Caco-2 (cell line): ENCODE measurements at regions of chr22 and their contacts with region 1.

Region 1: DNA sequence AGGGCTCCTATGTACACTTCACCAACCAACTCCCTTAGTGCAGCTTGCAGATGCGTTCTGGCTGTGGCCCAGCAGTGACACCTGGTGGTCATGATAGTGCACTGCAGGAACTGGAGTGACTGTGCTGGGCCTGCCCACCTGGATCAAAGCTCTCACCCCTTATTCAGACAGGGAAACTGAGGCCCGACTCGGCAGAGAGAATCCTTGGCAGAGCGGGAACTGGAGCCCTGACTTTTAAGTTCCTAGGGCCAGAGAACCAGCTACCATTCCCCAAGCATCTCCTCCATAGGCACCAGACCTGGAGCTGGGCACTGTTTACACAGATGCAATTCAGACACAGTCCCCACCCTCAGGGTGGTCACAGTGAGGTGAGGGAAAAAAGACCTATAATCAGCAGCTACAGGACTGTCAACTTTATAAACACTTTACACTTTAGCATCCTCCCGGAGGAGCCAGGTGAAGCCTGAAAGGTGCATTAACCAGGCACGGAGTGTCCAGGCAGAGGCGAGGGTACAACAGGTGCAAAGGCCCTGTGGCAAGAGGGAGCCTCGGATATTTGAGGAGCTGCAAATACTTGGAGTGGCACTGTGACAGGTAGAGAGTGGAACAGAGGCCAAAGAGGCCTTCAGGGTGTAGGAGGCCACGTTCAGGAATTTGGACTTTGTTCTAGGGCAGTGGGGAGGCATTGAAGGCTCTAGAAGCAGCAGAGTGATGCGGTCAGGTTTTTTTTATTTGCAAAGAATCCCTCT is 22.0 kb downstream of the RHBDD3 start:
- DNase-seq: peak; percentile 79 to 80
- H3K4me3 ChIP-seq: no peak overlapping the region
- H3K4me3 Mint-ChIP-seq: peak overlapping the region; percentile 13
- H3K27ac Mint-ChIP-seq: peak overlapping the region; percentile 74
- H3K4me1 ChIP-seq: peaks cover 22% of the 10 kb centered on the region
- H3K4me1 Mint-ChIP-seq: peaks cover 14% of the 10 kb centered on the region
- H3K27me3 ChIP-seq: no peaks in the 10 kb centered on the region
- H3K27me3 Mint-ChIP-seq: no peaks in the 10 kb centered on the region
- CTCF ChIP-seq: peak; percentile 95 to 97

Region 2: GRCh38 chr22:28600546-28601143 is 645.2 kb before region 1 on chr22:
- CTCF ChIA-PET with region 1: no interaction called
- POLR2A ChIA-PET with region 1: no interaction called
- intact Hi-C with region 1: loop called (anchors 10 kb)
- DNase-seq: peak in 1 of 2 experiments; percentile 44
- H3K4me3 ChIP-seq: no peak overlapping the region
- H3K4me3 Mint-ChIP-seq: no peak overlapping the region
- H3K27ac Mint-ChIP-seq: no peak overlapping the region
- H3K4me1 ChIP-seq: no peaks in the 10 kb centered on the region
- H3K4me1 Mint-ChIP-seq: no peaks in the 10 kb centered on the region
- H3K27me3 ChIP-seq: no peaks in the 10 kb centered on the region
- H3K27me3 Mint-ChIP-seq: peaks cover 6% of the 10 kb centered on the region
- CTCF ChIP-seq: peak; percentile 41 to 66

Region 3: GRCh38 chr22:28943501-28943879 is 302.3 kb before region 1 on chr22:
- CTCF ChIA-PET with region 1: no interaction called
- POLR2A ChIA-PET with region 1: no interaction called
- intact Hi-C with region 1: no loop called
- DNase-seq: no peak
- H3K4me3 ChIP-seq: no peak overlapping the region
- H3K4me3 Mint-ChIP-seq: no peak overlapping the region
- H3K27ac Mint-ChIP-seq: peak overlapping the region; percentile 65
- H3K4me1 ChIP-seq: peaks cover 42% of the 10 kb centered on the region
- H3K4me1 Mint-ChIP-seq: peaks cover 43% of the 10 kb centered on the region
- H3K27me3 ChIP-seq: no peaks in the 10 kb centered on the region
- H3K27me3 Mint-ChIP-seq: no peaks in the 10 kb centered on the region
- CTCF ChIP-seq: no peak

Region 4: GRCh38 chr22:29072193-29072978 is 173.4 kb before region 1 on chr22:
- CTCF ChIA-PET with region 1: interaction called, 3 read pairs
- POLR2A ChIA-PET with region 1: no interaction called
- intact Hi-C with region 1: loop called (anchors 5 kb)
- DNase-seq: peak; percentile 98 to 99
- H3K4me3 ChIP-seq: peak overlapping the region; percentile 49
- H3K4me3 Mint-ChIP-seq: peak overlapping the region; percentile 73
- H3K27ac Mint-ChIP-seq: peak overlapping the region; percentile 84
- H3K4me1 ChIP-seq: peaks cover 46% of the 10 kb centered on the region
- H3K4me1 Mint-ChIP-seq: peaks cover 40% of the 10 kb centered on the region
- H3K27me3 ChIP-seq: no peaks in the 10 kb centered on the region
- H3K27me3 Mint-ChIP-seq: no peaks in the 10 kb centered on the region
- CTCF ChIP-seq: no peak

Region 5: DNA sequence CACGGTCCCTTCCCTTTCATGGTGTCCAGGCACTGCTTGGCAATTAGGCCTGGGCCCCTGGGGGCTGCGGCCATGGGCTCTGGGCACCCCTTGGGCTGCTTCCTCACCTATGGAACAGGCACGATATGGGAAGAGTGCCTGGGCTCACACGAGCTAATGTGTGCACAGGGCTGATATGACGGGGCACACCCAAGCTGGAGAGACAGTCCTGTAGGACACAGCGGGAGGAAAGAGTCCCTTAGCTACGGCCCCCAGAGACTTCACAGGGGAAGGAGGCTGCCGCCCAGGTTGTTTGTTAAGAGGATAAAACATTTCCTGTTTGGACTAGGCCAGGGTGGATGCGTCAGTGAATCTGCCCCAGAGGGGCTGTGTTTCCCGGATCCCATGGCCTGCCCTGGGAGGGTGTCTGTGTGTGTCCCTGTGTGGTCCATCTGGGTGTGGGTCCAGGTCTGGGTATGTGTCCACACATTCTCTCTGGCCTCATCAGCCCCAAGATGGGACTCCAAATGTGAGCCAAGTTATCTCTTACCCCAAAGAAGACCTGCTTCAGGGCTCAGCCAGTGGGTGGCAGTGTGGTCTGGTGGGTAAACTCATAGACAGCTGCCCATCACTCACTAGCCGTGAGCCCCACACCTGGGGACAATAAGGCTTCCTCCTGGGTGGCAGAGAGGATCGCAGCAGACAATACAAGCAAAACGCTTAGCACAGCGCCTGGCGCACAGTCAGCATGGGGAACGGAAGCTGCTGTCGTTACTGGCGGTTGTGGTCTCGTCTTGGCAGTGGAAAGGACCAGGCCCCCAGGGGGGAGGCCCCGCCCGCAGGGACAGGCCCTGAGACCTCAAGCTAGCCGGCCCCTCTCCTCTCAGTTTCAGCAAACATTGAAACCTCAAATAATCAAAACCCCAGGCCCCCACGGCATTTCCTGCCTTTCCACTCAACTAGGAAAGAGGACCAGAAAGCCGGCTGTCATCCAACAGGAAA is 43.3 kb before region 1 on chr22:
- CTCF ChIA-PET with region 1: interaction called, 40 read pairs
- POLR2A ChIA-PET with region 1: interaction called, 8 read pairs
- intact Hi-C with region 1: loop called (anchors 1 kb)
- DNase-seq: peak; percentile 55
- H3K4me3 ChIP-seq: no peak overlapping the region
- H3K4me3 Mint-ChIP-seq: no peak overlapping the region
- H3K27ac Mint-ChIP-seq: no peak overlapping the region
- H3K4me1 ChIP-seq: peaks cover 4% of the 10 kb centered on the region; the same call in 1 of the 2 replicates
- H3K4me1 Mint-ChIP-seq: no peaks in the 10 kb centered on the region
- H3K27me3 ChIP-seq: no peaks in the 10 kb centered on the region
- H3K27me3 Mint-ChIP-seq: no peaks in the 10 kb centered on the region
- CTCF ChIP-seq: peak; percentile 41 to 69

Region 6: GRCh38 chr22:29259253-29259899 is 13.6 kb after region 1 on chr22:
- CTCF ChIA-PET with region 1: interaction called, 10 read pairs
- POLR2A ChIA-PET with region 1: no interaction called
- intact Hi-C with region 1: no loop called
- DNase-seq: peak in 1 of 2 experiments; percentile 52
- H3K4me3 ChIP-seq: no peak overlapping the region
- H3K4me3 Mint-ChIP-seq: no peak overlapping the region
- H3K27ac Mint-ChIP-seq: no peak overlapping the region
- H3K4me1 ChIP-seq: no peaks in the 10 kb centered on the region
- H3K4me1 Mint-ChIP-seq: no peaks in the 10 kb centered on the region
- H3K27me3 ChIP-seq: no peaks in the 10 kb centered on the region
- H3K27me3 Mint-ChIP-seq: no peaks in the 10 kb centered on the region
- CTCF ChIP-seq: peak; percentile 16 to 32